HEK293 (cell line): ENCODE measurements at regions of chr21 and their contacts with region 1.

Region 1: GRCh38 chr21:26169061-26169610 is 1.4 kb downstream of the APP start:
- H3K4me3 ChIP-seq: peak overlapping the region; percentile 91
- H3K27ac ChIP-seq: peak overlapping the region; percentile 93; the same call in 1 of the 2 replicates
- H3K4me1 ChIP-seq: peaks cover 28% of the 10 kb centered on the region
- CTCF ChIP-seq: peak; percentile 57; the same call in 1 of the 2 replicates

Region 2: GRCh38 chr21:26157801-26158200 is 11.3 kb before region 1 on chr21:
- CTCF ChIA-PET with region 1: interaction called, 23 read pairs
- POLR2A ChIA-PET with region 1: interaction called, 3 read pairs
- H3K4me3 ChIP-seq: no peak overlapping the region
- H3K27ac ChIP-seq: no peak overlapping the region
- H3K4me1 ChIP-seq: peaks cover 7% of the 10 kb centered on the region; the same call in 1 of the 2 replicates
- CTCF ChIP-seq: no peak

Region 3: GRCh38 chr21:26297851-26298250 is 128.7 kb after region 1 on chr21:
- CTCF ChIA-PET with region 1: no interaction called
- POLR2A ChIA-PET with region 1: no interaction called
- H3K4me3 ChIP-seq: no peak overlapping the region
- H3K27ac ChIP-seq: no peak overlapping the region
- H3K4me1 ChIP-seq: no peaks in the 10 kb centered on the region
- CTCF ChIP-seq: no peak